Activated B cell treated with CpG ODN at 0.5 μM for 24 hours (primary cell): ENCODE measurements at regions of chr5 and their contacts with region 1.

Region 1: DNA sequence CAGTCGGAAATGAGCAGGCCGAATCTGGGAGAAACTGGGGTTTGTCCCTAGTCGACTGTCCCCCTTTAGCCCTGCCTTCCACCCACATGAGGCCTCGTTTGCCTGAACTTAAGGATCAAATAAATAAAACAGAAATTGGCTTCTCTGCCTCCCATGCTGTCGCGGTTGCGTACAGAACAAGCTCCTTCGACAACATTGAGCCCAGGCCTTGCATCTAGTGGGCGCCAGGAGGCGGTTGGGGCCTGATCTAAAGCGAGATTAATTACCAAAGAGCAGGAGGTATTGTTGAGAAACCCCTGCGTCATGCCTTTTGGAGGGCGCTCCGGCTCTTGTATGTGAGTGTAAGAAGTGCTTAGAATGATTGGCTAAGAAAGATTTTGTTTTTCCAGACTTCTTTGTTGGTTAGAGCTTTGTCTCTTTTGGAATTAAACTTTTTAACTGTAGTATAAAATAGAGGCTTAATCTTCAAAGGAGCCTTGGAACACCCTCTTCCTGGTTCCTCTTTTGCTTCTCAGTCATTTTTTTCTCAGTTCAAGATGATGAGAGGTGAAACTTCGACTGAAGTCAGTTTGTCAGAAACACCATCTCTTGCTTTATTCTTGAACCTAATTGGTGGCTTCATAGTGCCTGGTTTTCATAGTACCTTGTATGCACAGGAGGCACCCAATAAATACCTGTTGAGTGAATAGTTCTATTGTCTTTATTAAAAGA is 827 bp downstream of the ATP6V0E1 start:
- DNase-seq: peak; percentile 48
- ATAC-seq: peak; percentile 67
- H3K4me3 Mint-ChIP-seq: peak overlapping the region; percentile 98
- H3K27ac Mint-ChIP-seq: peak overlapping the region; percentile 96
- H3K4me1 Mint-ChIP-seq: peaks cover 44% of the 10 kb centered on the region
- H3K27me3 Mint-ChIP-seq: no peaks in the 10 kb centered on the region
- CTCF ChIP-seq: no peak

Region 2: GRCh38 chr5:172958331-172959046 is 25.9 kb before region 1 on chr5:
- CTCF ChIA-PET with region 1: interaction called, 3 read pairs
- POLR2A ChIA-PET with region 1: interaction called, 38 read pairs
- intact Hi-C with region 1: loop called (anchors 1 kb)
- DNase-seq: peak; percentile 64
- ATAC-seq: peak; percentile 76
- H3K4me3 Mint-ChIP-seq: peak overlapping the region; percentile 97
- H3K27ac Mint-ChIP-seq: peak overlapping the region; percentile 94
- H3K4me1 Mint-ChIP-seq: peaks cover 31% of the 10 kb centered on the region
- H3K27me3 Mint-ChIP-seq: no peaks in the 10 kb centered on the region
- CTCF ChIP-seq: no peak

Region 3: DNA sequence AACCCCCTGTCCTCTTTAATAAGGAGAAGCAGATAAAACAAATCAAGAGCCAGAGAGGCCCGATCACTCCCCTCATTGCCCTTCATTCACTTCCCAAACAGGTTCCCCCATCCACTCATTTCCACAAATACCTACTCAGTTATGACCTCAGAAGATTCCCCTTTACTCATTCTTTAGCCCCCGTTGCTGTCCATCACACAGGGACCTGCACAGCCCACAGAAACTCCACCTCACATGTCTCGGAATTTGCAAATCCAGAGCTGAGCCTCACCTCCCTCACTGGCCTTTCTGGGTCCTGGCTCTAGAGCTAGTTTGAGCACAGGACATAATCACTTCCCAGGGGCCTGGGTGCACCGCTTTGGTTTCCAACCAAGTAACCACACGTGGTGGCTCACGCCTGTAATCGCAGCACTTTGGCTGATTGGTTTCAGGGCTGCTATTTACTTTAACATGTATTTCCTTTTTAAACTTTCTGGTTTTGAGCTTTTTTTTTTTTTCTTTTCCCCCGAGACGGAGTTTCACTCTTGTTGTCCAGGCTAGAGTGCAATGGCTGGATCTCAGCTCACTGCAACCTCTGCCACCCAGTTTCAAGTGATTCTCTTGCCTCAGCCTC is 16.9 kb after region 1 on chr5:
- CTCF ChIA-PET with region 1: no interaction called
- POLR2A ChIA-PET with region 1: interaction called, 8 read pairs
- intact Hi-C with region 1: loop called (anchors 2 kb)
- DNase-seq: no peak
- ATAC-seq: no peak
- H3K4me3 Mint-ChIP-seq: peak overlapping the region; percentile 36
- H3K27ac Mint-ChIP-seq: peak overlapping the region; percentile 62
- H3K4me1 Mint-ChIP-seq: peaks cover 62% of the 10 kb centered on the region
- H3K27me3 Mint-ChIP-seq: no peaks in the 10 kb centered on the region
- CTCF ChIP-seq: no peak

Region 4: GRCh38 chr5:173035904-173036707 is 51.7 kb after region 1 on chr5:
- CTCF ChIA-PET with region 1: interaction called, 5 read pairs
- POLR2A ChIA-PET with region 1: interaction called, 31 read pairs
- intact Hi-C with region 1: loop called (anchors 5 kb)
- DNase-seq: peak; percentile 17
- ATAC-seq: peak; percentile 59
- H3K4me3 Mint-ChIP-seq: peak overlapping the region; percentile 82
- H3K27ac Mint-ChIP-seq: peak overlapping the region; percentile 91
- H3K4me1 Mint-ChIP-seq: peaks cover 57% of the 10 kb centered on the region
- H3K27me3 Mint-ChIP-seq: no peaks in the 10 kb centered on the region
- CTCF ChIP-seq: no peak

Region 5: DNA sequence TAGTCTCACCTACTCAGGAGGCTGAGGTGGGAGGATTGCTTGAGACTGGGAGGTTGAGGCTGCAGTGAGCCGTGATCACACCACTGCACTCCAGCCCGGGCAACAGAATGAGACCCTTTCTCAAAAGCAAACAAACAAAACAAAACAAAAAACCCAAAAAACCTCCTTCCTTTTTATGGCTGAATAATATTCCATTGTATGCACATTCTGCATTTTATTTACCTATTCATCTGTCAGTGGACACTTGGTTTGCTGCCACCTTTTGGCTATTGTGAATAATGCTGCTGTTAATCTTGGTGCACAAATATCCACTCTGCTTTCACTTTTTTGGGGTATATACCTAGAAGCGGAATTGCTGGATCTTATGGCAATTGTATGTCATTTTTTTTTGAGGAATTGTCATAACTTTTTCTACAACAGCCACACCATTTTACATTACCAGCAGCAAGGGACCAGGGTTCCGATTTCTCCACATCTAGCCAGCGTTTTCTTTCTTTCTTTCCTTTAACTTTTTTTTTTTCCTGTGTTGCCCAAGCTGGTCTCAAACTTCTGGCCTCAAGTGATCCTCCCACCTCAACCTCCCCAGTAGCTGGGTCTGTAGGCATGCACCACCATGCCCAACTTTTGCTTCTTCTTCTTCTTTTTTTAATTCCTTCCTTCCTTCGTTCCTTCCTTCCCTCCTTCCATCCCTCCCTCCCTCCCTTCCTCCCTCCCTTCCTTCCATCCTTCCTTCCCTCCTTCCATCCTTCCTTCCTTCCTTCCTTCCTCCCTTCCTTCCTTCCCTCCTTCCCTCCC is 220.0 kb after region 1 on chr5:
- CTCF ChIA-PET with region 1: interaction called, 3 read pairs
- POLR2A ChIA-PET with region 1: no interaction called
- intact Hi-C with region 1: loop called (anchors 1 kb)
- DNase-seq: no peak
- ATAC-seq: no peak
- H3K4me3 Mint-ChIP-seq: no peak overlapping the region
- H3K27ac Mint-ChIP-seq: no peak overlapping the region
- H3K4me1 Mint-ChIP-seq: no peaks in the 10 kb centered on the region
- H3K27me3 Mint-ChIP-seq: peaks cover 24% of the 10 kb centered on the region
- CTCF ChIP-seq: no peak